Caco-2 (cell line): ENCODE measurements at regions of chr19 and their contacts with region 1.

Region 1: DNA sequence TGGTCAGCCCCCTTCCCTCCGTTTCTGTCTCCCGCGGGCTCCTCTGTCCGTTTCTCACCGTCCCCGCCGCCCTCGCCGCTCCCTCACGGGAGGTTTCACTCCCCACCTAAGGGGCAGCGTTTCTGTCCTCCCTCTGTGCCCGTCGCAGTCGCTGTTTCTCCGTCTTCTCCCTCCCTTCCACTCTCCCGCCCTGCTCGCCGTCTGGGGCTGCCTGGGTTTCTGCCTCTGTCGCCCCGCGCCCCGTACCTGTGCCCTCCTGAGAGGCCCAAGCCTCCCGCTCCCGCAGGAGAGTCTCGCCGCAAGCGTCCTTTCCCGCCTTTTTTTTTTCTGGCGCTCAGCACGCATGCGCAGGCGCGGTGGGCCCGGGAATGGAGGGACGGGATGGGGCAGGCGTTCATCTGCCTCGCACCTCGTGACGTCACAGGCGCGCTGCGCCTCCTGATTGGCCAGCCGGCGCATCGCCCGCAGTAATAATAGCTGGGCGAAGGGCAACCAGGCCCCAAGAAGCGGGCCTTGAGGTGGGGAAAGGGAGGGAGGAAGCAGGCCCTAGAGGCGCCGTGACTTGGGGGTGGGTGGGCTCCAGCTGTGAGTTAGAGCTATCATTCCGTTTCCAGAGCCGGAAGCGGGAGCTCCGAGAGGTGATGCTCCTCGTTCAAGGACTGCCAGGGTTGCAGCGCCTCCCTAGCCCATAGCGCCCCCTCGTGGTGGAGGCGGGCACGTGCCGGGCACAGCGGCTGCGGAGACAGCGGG is 15.4 kb downstream of the SSC5D start:
- DNase-seq: peak; percentile 96 to 99
- H3K4me3 ChIP-seq: peak overlapping the region; percentile 53
- H3K4me3 Mint-ChIP-seq: peak overlapping the region; percentile 87
- H3K27ac Mint-ChIP-seq: peak overlapping the region; percentile 93
- H3K4me1 ChIP-seq: peaks cover 8% of the 10 kb centered on the region; the same call in 1 of the 2 replicates
- H3K4me1 Mint-ChIP-seq: peaks cover 18% of the 10 kb centered on the region
- H3K27me3 ChIP-seq: no peaks in the 10 kb centered on the region
- H3K27me3 Mint-ChIP-seq: peaks cover 8% of the 10 kb centered on the region
- CTCF ChIP-seq: peak; percentile 98 to 99

Region 2: DNA sequence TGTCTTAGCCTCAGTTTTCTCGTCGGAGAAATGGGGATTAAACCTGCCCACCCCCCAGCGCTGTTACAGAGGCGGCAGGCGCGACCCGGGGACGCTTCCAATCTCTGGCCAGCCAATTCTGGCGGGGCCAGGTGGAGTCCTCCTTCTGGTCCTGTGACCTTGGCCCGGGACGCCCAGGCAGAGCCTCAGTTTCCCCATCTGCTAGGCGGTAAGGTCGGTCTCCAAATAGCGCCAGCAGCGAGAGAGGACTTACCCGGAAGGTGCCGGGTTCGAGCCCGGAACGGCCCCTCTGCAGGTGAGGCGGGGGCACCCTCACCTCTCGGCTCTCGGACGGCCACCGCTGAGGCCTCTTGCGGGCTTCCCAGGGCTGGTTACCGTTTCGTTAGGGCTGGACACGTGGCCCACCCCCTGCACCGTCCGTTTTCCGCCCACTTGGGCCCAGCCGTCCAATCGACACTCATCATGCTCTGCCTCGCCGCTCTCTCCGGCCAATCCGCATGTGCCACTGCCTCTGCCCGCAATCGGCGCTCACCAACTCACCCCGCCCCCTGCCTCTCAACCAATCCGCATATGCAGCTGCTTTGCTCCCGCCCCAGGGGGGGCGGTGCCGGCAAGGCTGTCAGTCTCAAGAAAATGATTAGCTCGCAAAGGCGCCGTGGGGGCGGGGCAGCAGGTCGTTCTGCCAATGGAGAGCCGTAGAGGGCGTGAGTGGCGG is 42.3 kb before region 1 on chr19 and contains the start of gene ISOC2:
- CTCF ChIA-PET with region 1: interaction called, 35 read pairs
- POLR2A ChIA-PET with region 1: interaction called, 5 read pairs
- intact Hi-C with region 1: loop called (anchors 1 kb)
- DNase-seq: peak; percentile 100
- H3K4me3 ChIP-seq: peak within 1 kb of the TSS; percentile 67
- H3K4me3 Mint-ChIP-seq: peak within 1 kb of the TSS; percentile 81
- H3K27ac Mint-ChIP-seq: peak within 1 kb of the TSS; percentile 19
- H3K4me1 ChIP-seq: peaks cover 13% of the 10 kb centered on the region
- H3K4me1 Mint-ChIP-seq: peaks cover 8% of the 10 kb centered on the region
- H3K27me3 ChIP-seq: no peaks in the 10 kb centered on the region
- H3K27me3 Mint-ChIP-seq: peaks cover 5% of the 10 kb centered on the region
- CTCF ChIP-seq: no peak
- total RNA-seq, gene ISOC2: 40.6 and 49.6 TPM in 2 replicates

Region 3: DNA sequence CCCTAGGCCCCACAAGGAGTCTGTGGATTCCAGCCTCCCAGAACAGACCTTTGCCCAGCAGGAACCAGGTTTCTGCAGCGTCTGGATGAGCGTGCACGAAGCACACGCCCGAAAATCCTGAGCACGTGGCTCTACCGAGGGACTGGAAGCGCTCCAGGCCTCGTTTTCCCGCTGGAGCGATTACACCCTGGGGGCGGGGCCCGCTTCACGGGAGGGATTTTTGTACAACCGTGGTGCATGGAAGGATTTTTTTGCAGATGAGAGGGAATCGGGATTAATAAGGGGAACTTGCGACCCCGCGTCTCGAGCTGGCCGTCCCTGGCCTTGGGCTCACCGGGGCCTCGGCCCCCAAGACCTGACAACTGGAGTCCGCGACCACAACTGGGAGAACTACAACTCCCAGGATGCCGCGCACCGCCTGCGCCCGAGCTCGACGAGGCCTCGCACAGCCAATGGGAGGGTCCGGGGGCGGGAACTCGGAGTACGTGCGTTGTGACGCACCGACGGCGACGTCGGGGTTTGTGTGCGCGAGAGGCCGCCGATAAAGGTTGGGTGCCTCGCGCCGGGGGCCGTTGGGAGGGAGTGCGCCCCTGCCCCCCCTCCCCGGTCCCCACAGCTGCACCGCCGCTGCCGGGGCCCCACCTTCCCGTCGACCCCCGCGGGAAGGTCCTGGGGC is 27.4 kb before region 1 on chr19 and contains the start of gene ZNF628:
- CTCF ChIA-PET with region 1: interaction called, 28 read pairs
- POLR2A ChIA-PET with region 1: interaction called, 17 read pairs
- intact Hi-C with region 1: no loop called
- DNase-seq: peak; percentile 99
- H3K4me3 ChIP-seq: peak within 1 kb of the TSS; percentile 47
- H3K4me3 Mint-ChIP-seq: peak within 1 kb of the TSS; percentile 94
- H3K27ac Mint-ChIP-seq: peak within 1 kb of the TSS; percentile 99
- H3K4me1 ChIP-seq: peaks cover 14% of the 10 kb centered on the region
- H3K4me1 Mint-ChIP-seq: peaks cover 19% of the 10 kb centered on the region
- H3K27me3 ChIP-seq: no peaks in the 10 kb centered on the region
- H3K27me3 Mint-ChIP-seq: no peaks in the 10 kb centered on the region
- CTCF ChIP-seq: no peak
- total RNA-seq, gene ZNF628: 12.3 and 13.9 TPM in 2 replicates

Region 4: DNA sequence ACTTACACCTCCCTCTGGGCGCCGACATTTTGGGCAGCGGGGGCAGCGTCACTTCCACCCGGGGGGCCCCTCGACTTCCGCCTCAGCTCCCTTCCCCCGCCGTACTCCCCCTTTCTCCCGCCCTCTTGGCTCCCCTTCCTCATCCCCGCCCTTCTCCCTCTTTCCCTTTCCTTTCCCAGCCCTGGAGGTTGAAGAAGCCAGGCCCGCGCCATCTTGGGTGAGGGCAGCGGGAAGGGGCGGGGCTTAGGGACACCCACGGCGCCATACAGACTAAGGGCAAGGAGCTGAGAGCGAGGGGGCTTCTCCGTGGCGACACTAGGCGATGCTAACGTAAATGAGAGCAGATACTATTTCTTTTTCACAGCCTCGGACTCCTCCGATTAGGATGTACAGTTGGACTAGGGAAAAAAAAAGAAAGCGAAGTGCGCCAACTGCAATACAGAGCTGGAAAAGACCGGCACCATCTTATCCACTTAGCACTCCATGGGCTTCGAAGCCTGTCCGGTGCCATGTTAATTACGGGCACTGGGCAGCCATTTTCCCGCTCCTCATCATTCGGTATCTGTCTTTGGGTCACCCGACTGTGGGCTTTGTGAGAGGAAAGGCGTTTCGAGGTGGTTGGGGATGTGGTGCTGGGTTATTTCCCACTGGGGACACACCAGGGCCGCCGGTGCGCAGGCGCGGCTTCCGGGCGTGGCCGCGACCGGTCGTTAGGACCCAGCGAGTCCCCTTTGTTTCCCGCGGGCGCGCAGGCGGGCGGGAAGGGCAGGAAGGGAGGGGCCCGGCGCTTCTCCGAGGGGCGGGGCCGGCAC is 96.0 kb after region 1 on chr19 and contains the start of gene FIZ1:
- CTCF ChIA-PET with region 1: interaction called, 14 read pairs
- POLR2A ChIA-PET with region 1: no interaction called
- intact Hi-C with region 1: no loop called
- DNase-seq: peak; percentile 99
- H3K4me3 ChIP-seq: peak within 1 kb of the TSS; percentile 70
- H3K4me3 Mint-ChIP-seq: peak within 1 kb of the TSS; percentile 87
- H3K27ac Mint-ChIP-seq: peak within 1 kb of the TSS; percentile 98
- H3K4me1 ChIP-seq: peaks cover 5% of the 10 kb centered on the region
- H3K4me1 Mint-ChIP-seq: peaks cover 14% of the 10 kb centered on the region
- H3K27me3 ChIP-seq: no peaks in the 10 kb centered on the region
- H3K27me3 Mint-ChIP-seq: no peaks in the 10 kb centered on the region
- CTCF ChIP-seq: no peak
- total RNA-seq, gene FIZ1: 27.2 and 27.7 TPM in 2 replicates